Dorsolateral prefrontal cortex (tissue), 120 donors: ENCODE measurements at regions of chrX and their contacts with region 1.

Region 1: GRCh38 chrX:53224860-53225797 is at the start of gene KDM5C:
- DNase-seq: peak; percentile 87 to 93 (median 92)
- H3K4me3 ChIP-seq: peak within 1 kb of the TSS; percentile 56 to 100 (median 95)
- H3K27ac ChIP-seq: peak within 1 kb of the TSS; percentile 75 to 98 (median 91)
- H3K27me3 ChIP-seq: peaks cover 0 to 18% (median 0%) of the 10 kb centered on the region in 45 donors
- CTCF ChIP-seq: peak in 20 of 56 donors; percentile 6 to 57 (median 24)
- total RNA-seq, gene KDM5C: 56.6 to 149 (median 107) TPM

Region 2: DNA sequence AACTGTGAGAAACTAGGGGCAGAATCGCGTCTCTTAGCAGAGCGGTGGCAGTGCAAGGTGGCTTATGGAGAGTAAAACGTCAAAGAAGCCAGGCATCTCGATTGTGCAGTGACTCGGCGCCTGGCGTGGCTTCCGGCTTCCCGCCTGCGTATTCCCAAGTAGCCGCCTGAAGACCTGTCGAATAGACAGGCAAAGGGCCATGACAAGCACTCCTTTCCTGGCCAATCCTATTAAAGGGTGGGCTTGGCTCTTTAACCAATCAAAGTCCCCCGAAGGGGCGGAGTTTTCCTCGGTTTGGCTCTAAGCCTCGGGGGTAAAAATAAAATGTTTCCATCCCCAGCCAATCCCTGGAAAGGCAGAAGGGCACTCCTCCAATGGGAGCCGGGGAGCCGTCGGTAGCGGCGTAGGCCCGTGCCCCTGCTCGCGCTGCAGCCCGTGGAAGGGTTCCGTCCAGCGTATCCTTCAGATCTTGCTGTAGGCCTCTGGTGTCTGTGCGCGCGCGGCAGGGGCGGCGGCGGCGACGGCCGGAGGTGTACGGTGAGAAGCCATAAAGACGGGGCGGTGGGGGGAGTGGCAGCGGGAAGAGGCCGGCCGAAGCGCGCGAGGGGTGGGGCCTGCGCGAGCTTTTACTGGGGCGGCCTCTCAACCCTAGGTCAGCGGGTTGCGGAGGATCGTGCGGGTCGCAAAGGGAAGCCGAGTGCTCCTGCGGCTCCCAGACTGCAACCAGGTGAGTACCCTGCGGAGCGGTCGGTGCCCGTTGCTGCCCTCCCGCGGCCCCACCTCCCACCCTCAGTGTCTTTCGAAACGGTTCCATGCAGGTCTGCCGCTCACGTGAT is 131.2 kb before region 1 on chrX and contains the start of gene KANTR:
- intact Hi-C with region 1: loop called (anchors 5 to 10 kb)
- DNase-seq: peak; percentile 55 to 92 (median 85)
- H3K4me3 ChIP-seq: peak within 1 kb of the TSS; percentile 45 to 81 (median 69)
- H3K27ac ChIP-seq: peak within 1 kb of the TSS in 56 of 59 donors; percentile 25 to 93 (median 81)
- H3K27me3 ChIP-seq: peaks cover 0 to 70% (median 14%) of the 10 kb centered on the region in 45 donors
- CTCF ChIP-seq: peak in 3 of 56 donors; percentile 19 to 26 (median 20)
- total RNA-seq, gene KANTR: 25.4 to 60.7 (median 42.0) TPM

Region 3: GRCh38 chrX:53317365-53318069 is 92.4 kb after region 1 on chrX:
- intact Hi-C with region 1: loop called in 1 of 2 experiments (anchors 10 kb)
- DNase-seq: peak; percentile 64 to 87 (median 78)
- H3K4me3 ChIP-seq: peak overlapping the region in 53 of 59 donors; percentile 10 to 76 (median 65)
- H3K27ac ChIP-seq: peak overlapping the region in 9 of 59 donors; percentile 0 to 46 (median 12)
- H3K27me3 ChIP-seq: peaks cover 0 to 89% (median 32%) of the 10 kb centered on the region in 45 donors
- CTCF ChIP-seq: peak in 55 of 56 donors; percentile 55 to 90 (median 83)

Region 4: GRCh38 chrX:53422086-53422860 is 197.1 kb after region 1 on chrX and contains the start of gene SMC1A:
- intact Hi-C with region 1: loop called (anchors 2 to 10 kb)
- DNase-seq: peak; percentile 93 to 98 (median 98)
- H3K4me3 ChIP-seq: peak within 1 kb of the TSS; percentile 42 to 94 (median 79)
- H3K27ac ChIP-seq: peak within 1 kb of the TSS in 58 of 59 donors; percentile 24 to 95 (median 88)
- H3K27me3 ChIP-seq: peaks cover 0 to 12% (median 0%) of the 10 kb centered on the region in 45 donors
- CTCF ChIP-seq: peak in 19 of 56 donors; percentile 3 to 50 (median 19)
- total RNA-seq, gene SMC1A: 35.0 to 75.4 (median 51.9) TPM